Mammary epithelial cell (primary cell): ENCODE measurements at regions of chr4 and their contacts with region 1.

Region 1: DNA sequence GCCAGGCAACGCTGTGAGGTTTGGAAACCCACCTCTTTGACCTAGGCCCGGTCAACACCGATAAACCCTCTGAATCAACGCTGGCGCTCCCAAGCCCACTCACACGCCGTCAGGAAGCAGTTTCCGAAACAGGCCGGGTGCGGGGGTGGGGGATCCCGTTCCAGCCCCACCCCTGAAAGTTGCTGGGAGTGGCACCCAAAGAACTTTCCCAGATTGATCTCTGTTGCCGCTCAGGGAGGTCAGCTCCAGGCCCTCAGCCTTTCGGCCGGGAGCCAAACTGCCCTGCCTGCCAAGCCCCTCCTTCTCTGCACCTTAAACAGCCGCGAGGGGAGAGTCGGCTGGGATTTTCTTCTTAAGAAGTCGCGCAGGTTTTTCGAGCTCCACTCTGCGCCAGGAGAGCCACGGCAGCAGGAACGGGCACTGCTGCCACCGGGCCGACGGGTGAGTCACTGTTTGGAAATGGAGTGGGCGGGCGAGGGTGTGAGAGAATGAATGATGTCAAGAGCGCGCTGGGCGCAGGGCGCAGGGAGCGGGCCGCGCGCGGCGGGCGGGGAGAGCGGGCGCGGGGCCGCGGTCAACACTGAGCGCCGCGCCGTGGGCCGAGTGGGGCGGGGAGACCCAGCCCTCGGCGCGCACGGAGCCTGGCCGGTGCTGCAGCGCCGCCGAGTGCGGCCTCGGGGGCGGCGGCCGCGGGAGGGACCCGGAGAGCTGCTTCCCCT is at the start of gene SGMS2:
- DNase-seq: peak; percentile 95
- H3K4me3 ChIP-seq: peak within 1 kb of the TSS; percentile 90 to 97 (median 94)
- H3K27ac ChIP-seq: peak within 1 kb of the TSS; percentile 99
- H3K4me1 ChIP-seq: peaks cover 21% of the 10 kb centered on the region
- H3K27me3 ChIP-seq: no peaks in the 10 kb centered on the region
- CTCF ChIP-seq: no peak
- total RNA-seq, gene SGMS2: 48.1 to 151 TPM

Region 2: GRCh38 chr4:107743532-107743931 is 81.0 kb before region 1 on chr4:
- CTCF ChIA-PET with region 1: no interaction called
- dilution Hi-C with region 1: no loop called
- in situ Hi-C with region 1: no loop called
- intact Hi-C with region 1: no loop called
- DNase-seq: no peak
- H3K4me3 ChIP-seq: no peak overlapping the region
- H3K27ac ChIP-seq: no peak overlapping the region
- H3K4me1 ChIP-seq: no peaks in the 10 kb centered on the region
- H3K27me3 ChIP-seq: no peaks in the 10 kb centered on the region
- CTCF ChIP-seq: no peak

Region 3: DNA sequence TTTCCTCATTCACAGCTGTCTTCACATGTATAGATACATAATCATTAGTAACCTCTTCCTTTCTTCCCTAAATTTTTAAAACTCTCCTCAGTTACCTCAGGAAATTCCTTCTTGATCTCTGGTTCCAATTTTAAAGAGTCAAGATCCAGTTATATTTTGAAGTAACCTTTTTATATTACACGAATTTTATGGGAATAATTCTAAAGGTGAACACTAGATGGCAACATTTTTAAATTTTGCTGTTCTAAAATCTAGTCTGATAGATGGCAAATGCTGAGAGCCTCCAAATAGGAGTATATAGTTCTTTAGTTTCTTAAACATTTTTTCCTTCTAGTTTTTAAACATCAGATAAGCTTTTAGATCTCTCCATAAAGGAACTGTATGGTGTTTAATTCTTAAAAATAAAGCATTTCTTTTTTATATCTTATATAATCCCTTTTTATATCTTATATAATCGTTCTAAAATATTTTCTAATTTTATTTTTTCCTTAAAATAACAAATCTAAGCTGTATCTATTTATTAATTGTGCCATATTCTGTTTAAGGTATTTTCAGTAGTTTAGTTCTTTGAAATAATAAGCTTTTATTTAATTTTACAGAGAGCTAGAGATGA is 66.5 kb before region 1 on chr4:
- CTCF ChIA-PET with region 1: interaction called, 5 read pairs
- dilution Hi-C with region 1: no loop called
- in situ Hi-C with region 1: no loop called
- intact Hi-C with region 1: loop called (anchors 1 kb)
- DNase-seq: no peak
- H3K4me3 ChIP-seq: no peak overlapping the region
- H3K27ac ChIP-seq: no peak overlapping the region
- H3K4me1 ChIP-seq: no peaks in the 10 kb centered on the region
- H3K27me3 ChIP-seq: no peaks in the 10 kb centered on the region
- CTCF ChIP-seq: peak; percentile 45

Region 4: GRCh38 chr4:107799669-107800450 is 24.7 kb before region 1 on chr4:
- CTCF ChIA-PET with region 1: no interaction called
- dilution Hi-C with region 1: no loop called
- in situ Hi-C with region 1: no loop called
- intact Hi-C with region 1: no loop called
- DNase-seq: no peak
- H3K4me3 ChIP-seq: no peak overlapping the region
- H3K27ac ChIP-seq: no peak overlapping the region
- H3K4me1 ChIP-seq: peaks cover 15% of the 10 kb centered on the region
- H3K27me3 ChIP-seq: no peaks in the 10 kb centered on the region
- CTCF ChIP-seq: no peak

Region 5: GRCh38 chr4:107863850-107864371 is 39.4 kb after region 1 on chr4:
- CTCF ChIA-PET with region 1: interaction called, 16 read pairs
- dilution Hi-C with region 1: no loop called
- in situ Hi-C with region 1: no loop called
- intact Hi-C with region 1: loop called (anchors 1 kb)
- DNase-seq: peak; percentile 81
- H3K4me3 ChIP-seq: no peak overlapping the region
- H3K27ac ChIP-seq: peak overlapping the region; percentile 96
- H3K4me1 ChIP-seq: peaks cover 30% of the 10 kb centered on the region
- H3K27me3 ChIP-seq: no peaks in the 10 kb centered on the region
- CTCF ChIP-seq: no peak

Region 6: GRCh38 chr4:107876099-107876498 is 51.6 kb after region 1 on chr4:
- CTCF ChIA-PET with region 1: no interaction called
- dilution Hi-C with region 1: no loop called
- in situ Hi-C with region 1: no loop called
- intact Hi-C with region 1: no loop called
- DNase-seq: no peak
- H3K4me3 ChIP-seq: no peak overlapping the region
- H3K27ac ChIP-seq: no peak overlapping the region
- H3K4me1 ChIP-seq: peaks cover 9% of the 10 kb centered on the region
- H3K27me3 ChIP-seq: no peaks in the 10 kb centered on the region
- CTCF ChIP-seq: no peak

Region 7: GRCh38 chr4:107896158-107897045 is 71.9 kb after region 1 on chr4:
- CTCF ChIA-PET with region 1: no interaction called
- dilution Hi-C with region 1: no loop called
- in situ Hi-C with region 1: loop called in 1 of 2 experiments (anchors 5 kb)
- intact Hi-C with region 1: loop called (anchors 1 kb)
- DNase-seq: peak; percentile 98
- H3K4me3 ChIP-seq: peak overlapping the region; percentile 5 to 36 (median 27)
- H3K27ac ChIP-seq: peak overlapping the region; percentile 97
- H3K4me1 ChIP-seq: peaks cover 57% of the 10 kb centered on the region
- H3K27me3 ChIP-seq: no peaks in the 10 kb centered on the region
- CTCF ChIP-seq: no peak

Region 8: GRCh38 chr4:107913281-107913899 is 88.9 kb after region 1 on chr4:
- CTCF ChIA-PET with region 1: no interaction called
- dilution Hi-C with region 1: no loop called
- in situ Hi-C with region 1: no loop called
- intact Hi-C with region 1: loop called (anchors 1 kb)
- DNase-seq: peak; percentile 62
- H3K4me3 ChIP-seq: no peak overlapping the region
- H3K27ac ChIP-seq: no peak overlapping the region
- H3K4me1 ChIP-seq: no peaks in the 10 kb centered on the region
- H3K27me3 ChIP-seq: no peaks in the 10 kb centered on the region
- CTCF ChIP-seq: peak; percentile 67 to 68

Region 9: DNA sequence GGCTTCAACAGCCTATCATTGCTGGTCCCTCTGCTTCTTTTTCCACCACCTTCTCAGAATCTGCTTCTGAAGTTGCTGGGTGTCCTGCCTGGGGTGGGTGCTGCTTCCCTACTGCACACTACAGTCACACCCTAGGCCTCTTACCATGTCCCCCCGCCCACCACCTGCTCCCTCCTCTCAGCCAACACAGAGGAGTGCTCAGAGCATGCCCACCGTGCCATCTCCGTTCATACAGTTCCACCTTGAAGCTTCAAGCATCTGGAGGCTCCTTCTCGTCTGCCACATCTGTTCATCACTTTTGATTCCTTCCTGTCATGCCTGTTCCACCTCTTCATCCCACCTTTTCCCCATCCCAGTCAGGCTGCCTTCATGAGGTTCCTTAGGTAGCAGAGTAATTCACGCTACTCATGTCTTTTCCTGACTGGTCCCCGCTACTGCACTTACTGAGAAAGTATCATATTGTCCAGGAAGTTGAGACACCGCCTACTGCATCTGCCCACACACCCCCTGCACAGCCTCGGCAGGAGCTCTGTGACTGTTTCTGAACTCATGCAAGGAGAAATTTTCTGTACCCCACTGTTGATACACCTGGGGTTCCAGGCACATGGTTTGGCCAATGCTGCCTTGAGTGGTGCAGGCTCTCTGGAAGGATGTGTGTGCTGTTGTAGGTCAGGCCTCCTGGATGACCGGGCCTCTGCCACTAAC is 204.7 kb after region 1 on chr4:
- CTCF ChIA-PET with region 1: no interaction called
- dilution Hi-C with region 1: no loop called
- in situ Hi-C with region 1: no loop called
- intact Hi-C with region 1: no loop called
- DNase-seq: no peak
- H3K4me3 ChIP-seq: no peak overlapping the region
- H3K27ac ChIP-seq: no peak overlapping the region
- H3K4me1 ChIP-seq: no peaks in the 10 kb centered on the region
- H3K27me3 ChIP-seq: no peaks in the 10 kb centered on the region
- CTCF ChIP-seq: no peak

Region 10: GRCh38 chr4:108596344-108596743 is 771.8 kb after region 1 on chr4:
- CTCF ChIA-PET with region 1: no interaction called
- dilution Hi-C with region 1: no loop called
- in situ Hi-C with region 1: no loop called
- intact Hi-C with region 1: loop called (anchors 5 kb)
- DNase-seq: no peak
- H3K4me3 ChIP-seq: no peak overlapping the region
- H3K27ac ChIP-seq: no peak overlapping the region
- H3K4me1 ChIP-seq: peaks cover 11% of the 10 kb centered on the region
- H3K27me3 ChIP-seq: no peaks in the 10 kb centered on the region
- CTCF ChIP-seq: no peak